A673 (cell line): ENCODE measurements at regions of chr9 and their contacts with region 1.

Region 1: GRCh38 chr9:119289740-119290433 is 79.3 kb downstream of the BRINP1 start:
- DNase-seq: peak; percentile 63
- H3K4me3 ChIP-seq: no peak overlapping the region
- H3K27ac ChIP-seq: no peak overlapping the region
- H3K4me1 ChIP-seq: no peaks in the 10 kb centered on the region
- H3K27me3 ChIP-seq: no peaks in the 10 kb centered on the region
- CTCF ChIP-seq: peak; percentile 80

Region 2: DNA sequence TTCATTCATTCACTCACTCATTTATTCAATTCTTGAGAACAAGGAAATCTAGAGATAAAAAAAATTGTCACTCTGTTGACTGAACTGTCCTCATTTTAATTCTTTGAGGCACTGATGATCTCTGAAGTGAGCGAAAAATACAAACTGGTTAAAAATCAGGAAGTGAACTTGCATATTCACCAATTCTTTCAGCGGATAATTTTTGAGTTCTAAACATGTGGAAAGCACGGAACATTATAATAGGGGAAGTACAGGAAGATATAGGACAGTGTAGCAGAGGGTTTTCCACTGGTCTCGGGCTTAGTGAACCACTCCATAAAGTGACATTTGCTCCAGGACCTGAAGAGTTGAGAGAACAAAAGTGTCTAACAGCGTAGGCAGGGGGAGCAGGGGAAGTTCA is 1416.2 kb before region 1 on chr9:
- CTCF ChIA-PET with region 1: no interaction called
- POLR2A ChIA-PET with region 1: no interaction called
- intact Hi-C with region 1: no loop called
- DNase-seq: no peak
- H3K4me3 ChIP-seq: no peak overlapping the region
- H3K27ac ChIP-seq: no peak overlapping the region
- H3K4me1 ChIP-seq: no peaks in the 10 kb centered on the region
- H3K27me3 ChIP-seq: peaks cover 4% of the 10 kb centered on the region
- CTCF ChIP-seq: no peak

Region 3: DNA sequence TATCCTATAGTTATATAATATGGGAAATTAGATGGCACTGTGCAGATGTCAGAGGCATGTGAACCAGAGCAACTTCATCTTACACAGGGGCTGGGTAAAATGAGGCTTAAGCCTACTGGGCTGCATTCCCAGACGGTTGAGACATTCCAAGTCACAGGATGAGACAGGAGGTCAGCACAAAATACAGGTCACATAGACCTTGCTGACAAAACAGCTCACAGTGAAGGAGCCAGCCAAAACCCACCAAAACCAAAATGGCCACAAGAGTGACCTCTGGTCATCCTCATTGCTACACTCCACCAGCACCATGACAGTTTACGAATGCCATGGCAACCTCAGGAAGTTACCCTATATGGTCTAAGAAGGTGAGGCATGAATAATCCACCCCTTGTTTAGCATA is 1106.3 kb before region 1 on chr9:
- CTCF ChIA-PET with region 1: no interaction called
- POLR2A ChIA-PET with region 1: no interaction called
- intact Hi-C with region 1: no loop called
- DNase-seq: no peak
- H3K4me3 ChIP-seq: no peak overlapping the region
- H3K27ac ChIP-seq: no peak overlapping the region
- H3K4me1 ChIP-seq: no peaks in the 10 kb centered on the region
- H3K27me3 ChIP-seq: no peaks in the 10 kb centered on the region
- CTCF ChIP-seq: no peak

Region 4: DNA sequence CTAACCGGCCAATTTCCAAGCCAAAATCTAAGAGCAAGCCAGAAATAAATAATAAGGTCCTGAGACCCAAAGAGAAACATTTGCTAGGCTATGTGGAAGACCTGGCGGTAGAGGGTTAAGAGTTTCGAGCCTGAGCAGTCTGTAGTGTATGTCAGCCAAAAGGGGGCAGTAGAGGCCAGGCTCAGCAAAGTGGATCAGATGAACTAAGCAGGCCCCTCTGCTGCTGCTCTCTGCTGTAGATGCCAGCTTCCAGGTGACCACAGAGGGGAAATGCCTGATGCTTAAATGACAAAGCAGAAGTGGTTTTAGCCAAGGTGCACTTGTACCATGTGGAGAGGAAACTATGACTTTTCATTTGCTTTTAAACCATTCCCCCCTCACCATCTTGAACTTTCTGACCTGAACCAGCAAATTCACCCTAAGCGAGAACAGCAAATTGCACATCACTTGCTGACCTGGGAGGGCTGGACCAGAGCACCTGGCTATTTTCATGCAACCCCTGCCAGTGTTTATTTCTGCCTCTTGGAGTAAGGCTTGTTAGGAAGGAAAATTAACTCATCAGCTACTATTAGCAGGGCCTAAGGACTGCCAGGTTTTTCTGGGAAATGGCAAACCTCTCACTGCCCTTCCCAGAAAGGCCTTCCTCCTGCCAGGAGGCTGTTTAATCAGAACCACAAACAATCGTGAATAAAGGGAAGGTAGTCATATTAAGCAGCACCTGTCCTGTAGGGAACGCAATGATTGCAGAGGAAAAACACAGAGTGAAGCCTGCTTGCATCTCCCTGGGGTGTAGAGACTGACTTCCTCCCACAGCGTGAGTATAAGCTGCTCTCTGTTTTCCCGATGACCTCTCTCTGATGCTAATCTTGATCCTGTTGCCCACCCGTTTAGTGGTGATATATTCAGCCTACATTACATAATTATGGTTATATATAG is 767.5 kb before region 1 on chr9:
- CTCF ChIA-PET with region 1: no interaction called
- POLR2A ChIA-PET with region 1: no interaction called
- intact Hi-C with region 1: loop called (anchors 5 kb)
- DNase-seq: peak; percentile 51
- H3K4me3 ChIP-seq: no peak overlapping the region
- H3K27ac ChIP-seq: no peak overlapping the region
- H3K4me1 ChIP-seq: no peaks in the 10 kb centered on the region
- H3K27me3 ChIP-seq: no peaks in the 10 kb centered on the region
- CTCF ChIP-seq: peak; percentile 70